ENCODE measurements at regions of chr11 and their contacts with region 1.

Region 1: GRCh38 chr11:16820324-16821092 is 82.1 kb downstream of the C11orf58 start:
- DNase-seq: peak; percentile 66 to 91
- H3K4me3 ChIP-seq: no peak overlapping the region
- H3K27ac ChIP-seq: no peak overlapping the region
- H3K4me1 ChIP-seq: peaks cover 4 to 7% (median 5%) of the 10 kb centered on the region in 4 experiments; a peak in 5 of 7 replicates
- H3K27me3 ChIP-seq: no peaks in the 10 kb centered on the region
- CTCF ChIP-seq: peak; percentile 82 to 93 (median 85)
- EP300 ChIP-seq: no peak
- POLR2A ChIP-seq: no peak
- RAD21 ChIP-seq: peak; percentile 84 to 87

Region 2: GRCh38 chr11:16801288-16801980 is 19.1 kb before region 1 on chr11:
- CTCF ChIA-PET with region 1: interaction called, 42 read pairs
- POLR2A ChIA-PET with region 1: no interaction called
- DNase-seq: no peak
- H3K4me3 ChIP-seq: no peak overlapping the region
- H3K27ac ChIP-seq: no peak overlapping the region
- H3K4me1 ChIP-seq: no peaks in the 10 kb centered on the region
- H3K27me3 ChIP-seq: no peaks in the 10 kb centered on the region
- CTCF ChIP-seq: no peak
- EP300 ChIP-seq: no peak
- POLR2A ChIP-seq: no peak
- RAD21 ChIP-seq: no peak

Region 3: DNA sequence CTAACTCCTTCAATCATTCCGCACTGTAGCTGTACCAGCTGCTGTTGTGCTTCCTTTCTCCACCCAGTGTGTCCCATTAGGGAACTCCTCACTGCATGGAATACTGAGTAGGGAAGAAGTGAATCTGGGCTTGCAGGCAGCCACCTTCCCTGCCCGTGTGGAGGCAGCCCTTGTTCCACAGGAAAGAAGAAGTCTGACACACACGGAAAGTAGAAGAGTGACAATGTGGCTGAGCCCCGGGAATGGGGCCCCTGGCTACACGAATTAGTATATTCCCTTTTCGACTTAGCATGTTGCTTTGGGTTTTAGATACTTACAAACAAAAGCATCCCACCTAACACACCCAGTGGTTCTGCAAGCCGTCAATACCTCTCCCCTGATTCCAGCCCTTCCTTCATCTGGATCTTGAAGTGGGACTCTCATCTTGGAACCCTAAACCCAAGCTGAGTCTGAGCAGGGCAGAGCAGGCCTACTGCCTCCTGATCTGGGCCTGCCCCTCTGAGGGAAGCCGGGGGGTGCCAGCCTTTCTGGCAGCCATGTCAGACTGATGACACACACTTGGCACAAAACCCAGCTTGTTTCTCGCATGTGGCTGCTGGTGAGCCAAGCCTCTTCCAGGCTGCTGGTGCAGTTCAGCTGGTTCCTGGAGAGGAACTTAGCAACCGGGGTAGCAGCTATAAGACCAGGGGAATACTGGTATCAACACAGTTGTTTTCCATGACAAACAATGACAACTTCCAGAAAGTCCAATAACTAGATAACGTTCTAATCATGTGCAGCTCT is 10.4 kb before region 1 on chr11:
- CTCF ChIA-PET with region 1: interaction called, 42 read pairs
- POLR2A ChIA-PET with region 1: interaction called, 3 read pairs
- DNase-seq: no peak
- H3K4me3 ChIP-seq: no peak overlapping the region
- H3K27ac ChIP-seq: no peak overlapping the region
- H3K4me1 ChIP-seq: peaks cover 0 to 2% (median under 1%) of the 10 kb centered on the region in 4 experiments; a peak in 1 of 7 replicates
- H3K27me3 ChIP-seq: no peaks in the 10 kb centered on the region
- CTCF ChIP-seq: no peak
- EP300 ChIP-seq: no peak
- POLR2A ChIP-seq: no peak
- RAD21 ChIP-seq: no peak

Region 4: DNA sequence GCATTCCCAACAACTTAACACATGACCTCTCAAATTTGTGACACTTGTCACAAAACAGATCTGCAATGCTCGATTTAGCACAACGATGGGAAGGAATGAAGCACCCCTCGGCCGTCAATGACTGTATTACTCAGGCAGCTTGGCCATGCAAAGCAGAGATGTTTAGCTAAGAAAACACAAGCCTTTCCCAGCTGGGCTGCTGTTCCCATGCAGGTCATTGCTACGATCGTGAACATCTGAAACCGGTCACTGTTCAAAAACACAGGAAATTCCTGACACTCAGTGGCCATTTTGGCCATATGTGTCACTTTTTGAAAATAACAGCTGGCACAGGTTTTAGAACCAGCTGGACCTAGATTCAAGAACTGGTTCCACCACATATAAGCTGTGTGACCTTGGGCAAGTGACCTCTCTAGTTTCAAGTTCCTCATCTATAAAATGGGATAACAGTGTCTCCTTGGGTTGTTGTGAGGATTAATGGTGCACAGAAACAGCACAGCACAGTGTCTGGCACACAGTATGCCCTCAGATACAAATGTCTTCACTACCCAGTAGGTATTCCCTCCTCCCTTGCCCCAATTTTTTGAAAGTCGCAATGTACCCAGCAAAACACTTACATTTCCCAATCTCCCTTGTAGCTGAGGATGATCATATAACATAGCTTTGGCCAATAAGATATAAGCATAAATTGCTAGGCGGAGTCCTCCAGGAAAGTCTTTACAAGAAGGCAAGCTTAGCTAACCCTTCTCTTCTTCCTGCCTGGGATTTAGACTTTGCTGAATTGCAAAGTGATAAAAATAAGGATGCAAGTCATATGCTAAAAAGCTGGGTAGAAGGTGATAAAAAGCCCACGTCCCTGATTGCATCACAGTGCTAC is 11.0 kb after region 1 on chr11:
- CTCF ChIA-PET with region 1: interaction called, 37 read pairs
- POLR2A ChIA-PET with region 1: interaction called, 3 read pairs
- DNase-seq: no peak
- H3K4me3 ChIP-seq: no peak overlapping the region
- H3K27ac ChIP-seq: no peak overlapping the region
- H3K4me1 ChIP-seq: peaks cover 0 to 10% (median 2%) of the 10 kb centered on the region in 4 experiments; a peak in 4 of 7 replicates
- H3K27me3 ChIP-seq: no peaks in the 10 kb centered on the region
- CTCF ChIP-seq: no peak
- EP300 ChIP-seq: no peak
- POLR2A ChIP-seq: no peak
- RAD21 ChIP-seq: no peak

Region 5: GRCh38 chr11:16912692-16913111 is 92.2 kb after region 1 on chr11:
- CTCF ChIA-PET with region 1: interaction called, 10 read pairs
- POLR2A ChIA-PET with region 1: no interaction called
- DNase-seq: no peak
- H3K4me3 ChIP-seq: no peak overlapping the region
- H3K27ac ChIP-seq: no peak overlapping the region
- H3K4me1 ChIP-seq: peaks cover 3 to 22% (median 17%) of the 10 kb centered on the region in 4 experiments; a peak in 5 of 7 replicates
- H3K27me3 ChIP-seq: no peaks in the 10 kb centered on the region
- CTCF ChIP-seq: no peak
- EP300 ChIP-seq: no peak
- POLR2A ChIP-seq: no peak
- RAD21 ChIP-seq: 0 out of 4 replicates have a peak, but pooled peaks of 1 of the 2 experiments have one; percentile 6

Measured in H1 (cell line).